A673 (cell line): ENCODE measurements at regions of chr22 and their contacts with region 1.

Region 1: GRCh38 chr22:46367707-46368191 is 32.2 kb downstream of the TRMU start:
- DNase-seq: peak; percentile 61
- H3K4me3 ChIP-seq: no peak overlapping the region
- H3K27ac ChIP-seq: no peak overlapping the region
- H3K4me1 ChIP-seq: no peaks in the 10 kb centered on the region
- H3K27me3 ChIP-seq: no peaks in the 10 kb centered on the region
- CTCF ChIP-seq: peak; percentile 91

Region 2: GRCh38 chr22:45984316-45984916 is 383.3 kb before region 1 on chr22:
- CTCF ChIA-PET with region 1: no interaction called
- POLR2A ChIA-PET with region 1: no interaction called
- intact Hi-C with region 1: no loop called
- DNase-seq: no peak
- H3K4me3 ChIP-seq: no peak overlapping the region
- H3K27ac ChIP-seq: no peak overlapping the region
- H3K4me1 ChIP-seq: no peaks in the 10 kb centered on the region
- H3K27me3 ChIP-seq: no peaks in the 10 kb centered on the region
- CTCF ChIP-seq: no peak

Region 3: GRCh38 chr22:46171940-46172339 is 195.8 kb before region 1 on chr22:
- CTCF ChIA-PET with region 1: interaction called, 10 read pairs
- POLR2A ChIA-PET with region 1: no interaction called
- intact Hi-C with region 1: no loop called
- DNase-seq: peak; percentile 71
- H3K4me3 ChIP-seq: peak overlapping the region; percentile 13
- H3K27ac ChIP-seq: peak overlapping the region; percentile 70
- H3K4me1 ChIP-seq: peaks cover 33% of the 10 kb centered on the region
- H3K27me3 ChIP-seq: no peaks in the 10 kb centered on the region
- CTCF ChIP-seq: no peak

Region 4: DNA sequence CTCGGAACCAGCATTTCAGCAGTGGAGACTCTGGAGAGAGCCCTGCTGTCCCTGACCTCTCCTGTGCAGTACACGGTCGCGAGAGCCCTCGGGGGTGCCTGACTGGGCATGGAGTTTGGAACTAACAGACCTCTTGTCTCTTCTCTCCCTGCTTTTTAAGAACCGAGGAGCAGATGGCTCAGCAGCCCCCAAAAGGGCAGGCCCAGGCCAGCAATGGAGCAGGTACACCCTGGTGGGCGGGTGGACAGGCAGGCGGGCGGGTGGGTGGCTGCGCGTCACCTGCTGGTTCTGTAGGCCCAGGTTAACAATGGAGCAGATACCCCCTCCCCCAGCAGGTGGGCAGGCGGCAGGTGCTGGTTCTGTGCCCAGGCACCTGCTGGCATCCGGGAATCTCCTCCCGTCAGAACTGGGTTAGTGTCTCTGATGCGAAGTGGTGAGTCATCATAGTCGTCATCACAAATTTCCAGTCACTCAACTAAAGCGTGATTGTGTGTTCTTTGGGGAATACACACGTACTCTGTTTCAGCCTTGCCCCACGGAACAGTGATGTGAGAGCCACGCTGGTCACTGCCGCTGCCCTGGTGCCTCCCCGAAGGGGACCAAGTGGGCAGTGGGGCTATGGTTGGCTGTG is 293.6 kb after region 1 on chr22:
- CTCF ChIA-PET with region 1: no interaction called
- POLR2A ChIA-PET with region 1: no interaction called
- intact Hi-C with region 1: no loop called
- DNase-seq: peak; percentile 55
- H3K4me3 ChIP-seq: no peak overlapping the region
- H3K27ac ChIP-seq: no peak overlapping the region
- H3K4me1 ChIP-seq: peaks cover 5% of the 10 kb centered on the region
- H3K27me3 ChIP-seq: no peaks in the 10 kb centered on the region
- CTCF ChIP-seq: no peak